ENCODE measurements at regions of chr21 and their contacts with region 1.

Region 1: DNA sequence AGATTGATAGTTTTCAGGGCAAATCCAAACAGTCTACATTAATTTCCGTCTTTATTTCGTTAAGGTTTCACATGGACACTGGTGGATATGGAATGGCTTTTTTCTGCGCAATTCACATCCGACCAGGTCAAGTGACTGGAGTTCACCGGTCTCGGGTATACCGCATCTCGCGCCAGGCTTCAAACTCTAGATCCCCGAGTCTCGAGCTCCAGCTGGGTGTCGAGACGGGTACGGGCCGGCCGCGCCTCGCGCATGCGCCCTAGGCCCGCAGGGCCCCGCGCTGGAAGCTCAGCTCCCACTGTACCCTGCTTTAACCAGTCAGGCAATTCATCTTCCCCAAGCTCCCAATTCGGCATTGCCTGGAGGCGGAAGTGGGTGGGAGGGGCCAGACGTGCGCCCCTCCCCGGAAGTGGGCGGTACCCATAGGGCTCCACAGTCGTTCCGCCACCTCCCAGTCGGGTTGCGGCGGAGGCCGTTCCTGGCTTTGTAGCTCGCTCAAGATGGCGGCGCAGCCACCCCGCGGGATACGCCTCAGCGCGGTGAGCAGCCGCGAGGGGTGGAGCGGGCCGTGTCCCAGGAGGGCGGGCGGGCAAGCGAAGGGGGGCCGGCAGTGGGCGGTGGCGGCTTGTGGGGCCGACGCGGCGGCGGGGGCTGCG is at the start of gene MORC3:
- DNase-seq: peak; percentile 96 to 99 (median 98)
- ATAC-seq: peak; percentile 87
- H3K4me3 ChIP-seq: peak within 1 kb of the TSS; percentile 88
- H3K4me3 Mint-ChIP-seq: peak within 1 kb of the TSS; percentile 90
- H3K27ac ChIP-seq: peak within 1 kb of the TSS; percentile 81 to 96
- H3K27ac Mint-ChIP-seq: peak within 1 kb of the TSS; percentile 98
- H3K4me1 ChIP-seq: peaks cover 22% of the 10 kb centered on the region
- H3K4me1 Mint-ChIP-seq: peaks cover 39% of the 10 kb centered on the region
- H3K27me3 ChIP-seq: no peaks in the 10 kb centered on the region
- H3K27me3 Mint-ChIP-seq: no peaks in the 10 kb centered on the region
- CTCF ChIP-seq: no peak
- total RNA-seq, gene MORC3: 70.2 to 71.0 TPM

Region 2: DNA sequence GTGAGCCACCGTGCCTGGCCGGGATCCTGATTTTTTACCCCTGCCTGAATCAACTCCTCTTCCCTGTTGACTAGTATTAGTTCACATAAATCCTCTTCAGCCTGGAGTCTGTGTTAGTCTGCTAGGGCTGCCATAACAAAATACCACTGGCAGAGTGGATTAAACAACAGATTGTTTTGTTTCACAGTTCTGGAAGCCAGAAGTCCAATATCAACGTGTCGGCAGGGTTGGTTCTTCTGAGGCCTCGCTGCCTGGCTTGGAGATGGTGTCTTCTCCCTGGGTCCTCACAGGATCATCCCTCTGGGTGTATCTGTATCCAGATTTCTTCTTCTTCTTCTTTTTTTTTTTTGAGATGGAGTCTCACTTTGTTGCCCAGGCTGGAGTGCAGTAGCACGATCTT is 145.1 kb before region 1 on chr21:
- CTCF ChIA-PET with region 1: interaction called, 7 read pairs
- POLR2A ChIA-PET with region 1: interaction called, 24 read pairs
- intact Hi-C with region 1: no loop called
- DNase-seq: no peak
- ATAC-seq: no peak
- H3K4me3 ChIP-seq: no peak overlapping the region
- H3K4me3 Mint-ChIP-seq: no peak overlapping the region
- H3K27ac ChIP-seq: no peak overlapping the region
- H3K27ac Mint-ChIP-seq: peak overlapping the region; percentile 91
- H3K4me1 ChIP-seq: peaks cover 28% of the 10 kb centered on the region
- H3K4me1 Mint-ChIP-seq: peaks cover 33% of the 10 kb centered on the region
- H3K27me3 ChIP-seq: no peaks in the 10 kb centered on the region
- H3K27me3 Mint-ChIP-seq: no peaks in the 10 kb centered on the region
- CTCF ChIP-seq: no peak

Region 3: DNA sequence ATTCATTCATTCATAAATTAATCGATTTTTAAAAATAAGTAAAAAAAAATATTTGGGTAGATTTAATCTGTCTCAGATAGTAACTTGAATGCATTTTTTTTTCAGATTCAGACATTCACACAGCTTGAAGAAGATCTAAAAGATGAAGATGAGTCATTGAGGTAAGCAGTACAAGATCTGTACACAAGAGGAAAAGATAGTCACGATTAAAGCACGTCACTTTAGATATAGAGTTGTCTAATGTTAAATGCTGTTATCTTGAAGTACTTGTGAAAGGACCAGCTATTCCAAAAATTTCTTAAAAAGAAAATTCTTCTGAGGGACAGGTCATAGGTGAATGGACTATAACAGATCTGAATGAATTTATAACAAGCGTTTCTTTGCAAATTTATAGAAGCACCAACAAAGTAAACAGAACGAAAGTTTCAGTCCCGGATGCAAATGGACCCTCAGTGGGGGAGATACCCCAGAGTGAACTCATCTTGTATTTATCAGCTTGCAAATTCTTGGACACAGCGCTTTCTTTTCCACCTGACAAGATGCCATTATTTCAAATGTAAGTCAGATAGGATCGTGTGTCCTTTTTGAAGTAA is 31.1 kb before region 1 on chr21:
- CTCF ChIA-PET with region 1: interaction called, 18 read pairs
- POLR2A ChIA-PET with region 1: interaction called, 291 read pairs
- intact Hi-C with region 1: loop called (anchors 1 to 2 kb)
- DNase-seq: peak in 3 of 14 experiments; percentile 66 to 77 (median 73)
- ATAC-seq: peak; percentile 79
- H3K4me3 ChIP-seq: peak overlapping the region; percentile 27
- H3K4me3 Mint-ChIP-seq: peak overlapping the region; percentile 78
- H3K27ac ChIP-seq: peak overlapping the region; percentile 76 to 86
- H3K27ac Mint-ChIP-seq: peak overlapping the region; percentile 96
- H3K4me1 ChIP-seq: peaks cover 20% of the 10 kb centered on the region
- H3K4me1 Mint-ChIP-seq: peaks cover 35% of the 10 kb centered on the region
- H3K27me3 ChIP-seq: no peaks in the 10 kb centered on the region
- H3K27me3 Mint-ChIP-seq: no peaks in the 10 kb centered on the region
- CTCF ChIP-seq: no peak

Region 4: GRCh38 chr21:36330904-36331303 is 11.0 kb after region 1 on chr21:
- CTCF ChIA-PET with region 1: interaction called, 18 read pairs
- POLR2A ChIA-PET with region 1: interaction called, 11 read pairs
- intact Hi-C with region 1: no loop called
- DNase-seq: peak in 13 of 14 experiments; percentile 16 to 77 (median 41)
- ATAC-seq: peak; percentile 91
- H3K4me3 ChIP-seq: no peak overlapping the region
- H3K4me3 Mint-ChIP-seq: peak overlapping the region; percentile 8
- H3K27ac ChIP-seq: no peak overlapping the region
- H3K27ac Mint-ChIP-seq: peak overlapping the region; percentile 87
- H3K4me1 ChIP-seq: peaks cover 32% of the 10 kb centered on the region
- H3K4me1 Mint-ChIP-seq: peaks cover 44% of the 10 kb centered on the region
- H3K27me3 ChIP-seq: no peaks in the 10 kb centered on the region
- H3K27me3 Mint-ChIP-seq: no peaks in the 10 kb centered on the region
- CTCF ChIP-seq: peak; percentile 80